Activated CD4-positive, alpha-beta memory T cell treated with anti-CD3 and anti-CD28 coated beads for 36 hours (primary cell): ENCODE measurements at regions of chrX and their contacts with region 1.

Region 1: GRCh38 chrX:572537-573124 is 58.0 kb upstream of the SHOX start:
- DNase-seq: peak; percentile 12
- H3K4me3 Mint-ChIP-seq: no peak overlapping the region
- H3K27ac Mint-ChIP-seq: no peak overlapping the region
- H3K4me1 Mint-ChIP-seq: no peaks in the 10 kb centered on the region
- H3K27me3 Mint-ChIP-seq: no peaks in the 10 kb centered on the region

Region 2: DNA sequence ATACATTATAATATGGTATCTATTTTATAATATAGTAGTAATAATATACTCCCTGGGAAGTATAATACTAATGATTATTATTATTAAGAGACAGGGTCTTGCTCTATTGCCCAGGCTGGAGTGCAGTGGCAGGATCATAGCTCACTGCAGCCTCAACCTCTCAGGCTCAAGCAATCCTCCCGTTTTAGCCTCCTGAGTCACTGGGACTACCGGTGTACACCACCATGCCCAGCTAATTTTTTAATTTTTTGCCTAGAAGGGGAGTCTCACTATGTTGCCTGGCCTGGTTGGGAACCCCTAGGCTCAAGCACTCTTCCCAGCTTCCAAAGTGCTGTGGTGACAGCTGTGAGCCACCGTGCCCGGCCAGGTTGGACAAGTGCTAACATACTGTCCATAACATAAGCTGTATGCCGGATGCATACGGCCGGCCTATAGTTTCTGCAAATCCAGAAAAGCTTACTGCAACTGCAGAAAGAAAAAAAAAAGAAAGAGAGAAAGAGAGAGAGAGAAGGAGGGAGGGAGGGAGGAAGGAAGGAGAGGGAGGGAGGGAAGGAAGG is 91.7 kb before region 1 on chrX:
- CTCF ChIA-PET with region 1: no interaction called
- POLR2A ChIA-PET with region 1: no interaction called
- intact Hi-C with region 1: no loop called
- DNase-seq: peak; percentile 11
- H3K4me3 Mint-ChIP-seq: no peak overlapping the region
- H3K27ac Mint-ChIP-seq: no peak overlapping the region
- H3K4me1 Mint-ChIP-seq: no peaks in the 10 kb centered on the region
- H3K27me3 Mint-ChIP-seq: no peaks in the 10 kb centered on the region

Region 3: DNA sequence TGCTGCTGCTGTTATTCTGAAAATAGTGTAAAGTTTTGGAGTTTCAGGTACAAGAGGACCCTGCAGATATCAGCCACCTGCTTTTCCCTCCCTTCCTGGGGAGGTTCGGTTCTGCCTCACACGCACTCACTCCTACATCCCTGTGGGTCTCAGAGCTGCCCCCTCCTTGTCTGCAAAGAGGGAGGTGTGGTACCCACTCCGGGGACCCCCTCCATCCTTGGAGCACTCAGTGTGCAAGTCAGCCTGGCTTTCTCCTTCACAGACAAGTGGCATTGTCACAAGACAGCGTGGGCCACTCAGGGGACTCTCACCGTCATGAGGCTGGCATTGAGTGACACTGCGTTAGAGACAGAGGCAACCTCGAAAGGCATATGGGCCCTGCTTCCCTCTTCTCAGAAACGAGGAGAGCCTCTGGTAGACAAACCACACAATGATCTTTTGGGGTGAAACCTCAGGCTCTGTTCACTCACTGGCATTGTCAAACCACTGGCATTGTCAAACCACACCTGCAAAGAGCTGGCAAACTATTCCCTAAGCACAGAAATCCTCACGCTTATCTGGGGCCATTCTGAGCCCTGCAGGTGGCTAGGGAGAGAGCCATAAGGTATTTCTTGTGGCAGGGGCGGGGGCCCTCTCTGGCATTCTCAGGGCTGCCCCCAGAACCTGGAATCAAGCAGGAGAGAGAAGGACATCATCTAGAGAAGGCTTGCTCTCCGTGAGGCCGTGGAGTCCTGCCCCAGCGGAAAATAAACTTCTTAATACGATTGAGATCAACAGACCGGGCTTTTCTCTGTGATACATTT is 343.0 kb after region 1 on chrX:
- CTCF ChIA-PET with region 1: no interaction called
- POLR2A ChIA-PET with region 1: no interaction called
- intact Hi-C with region 1: loop called (anchors 10 kb)
- DNase-seq: peak; percentile 41
- H3K4me3 Mint-ChIP-seq: no peak overlapping the region
- H3K27ac Mint-ChIP-seq: no peak overlapping the region
- H3K4me1 Mint-ChIP-seq: no peaks in the 10 kb centered on the region
- H3K27me3 Mint-ChIP-seq: peaks cover 2% of the 10 kb centered on the region